Posterior vena cava (tissue), 2 donors: ENCODE measurements at regions of chr5 and their contacts with region 1.

Region 1: DNA sequence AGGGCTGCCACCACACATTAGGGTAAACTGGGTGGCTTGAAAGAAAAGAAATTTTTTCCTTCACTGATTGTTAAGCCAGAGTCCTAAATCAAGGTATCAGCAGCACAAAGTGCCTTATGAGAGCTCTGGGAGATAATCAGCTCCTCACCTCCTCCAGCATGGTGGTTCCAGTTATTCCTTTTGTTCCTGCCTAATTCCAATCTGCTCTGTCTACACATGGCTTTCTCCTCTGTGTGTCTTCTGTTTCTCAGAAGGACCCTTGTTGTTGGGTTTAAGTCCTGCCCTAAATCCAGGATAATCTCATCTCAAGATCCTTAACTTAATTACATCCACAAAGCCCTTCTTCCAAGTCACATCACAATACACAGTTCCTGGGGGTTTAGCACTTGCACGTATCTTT is 1352.0 kb upstream of the CDH9 start:
- DNase-seq: no peak

Region 2: GRCh38 chr5:28296254-28297013 is 93.9 kb before region 1 on chr5:
- intact Hi-C with region 1: no loop called
- DNase-seq: no peak

Region 3: DNA sequence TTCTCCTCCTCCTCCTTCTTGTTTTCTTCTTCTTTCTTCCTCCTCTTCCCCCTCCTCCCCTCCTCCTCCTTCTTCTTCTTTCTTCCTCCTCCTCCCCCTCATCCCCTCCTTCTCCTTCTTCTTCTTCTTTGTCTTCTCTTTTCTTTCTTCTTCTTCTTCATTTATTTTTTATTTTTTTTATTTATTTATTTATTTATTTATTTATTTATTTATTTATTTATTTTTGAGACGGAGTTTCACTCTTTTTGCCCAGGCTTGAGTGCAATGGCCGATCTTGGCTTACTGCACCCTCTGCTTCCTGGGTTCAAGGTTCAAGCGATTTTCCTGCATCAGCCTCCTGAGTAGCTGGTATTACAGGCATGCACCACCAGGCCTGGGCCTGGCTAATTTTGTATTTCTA is 19.4 kb before region 1 on chr5:
- intact Hi-C with region 1: loop called in 1 of 2 experiments (anchors 2 kb)
- DNase-seq: no peak